ENCODE measurements at regions of chr15 and their contacts with region 1.

Region 1: GRCh38 chr15:99755692-99756409 is 22.6 kb upstream of the LYSMD4 start:
- DNase-seq: peak in 1 of 2 donors; percentile 50
- ATAC-seq: peak; percentile 79 to 91 (median 89)
- H3K4me3 ChIP-seq: no peak overlapping the region
- H3K27ac ChIP-seq: no peak overlapping the region
- H3K4me1 ChIP-seq: peaks cover 0 to 4% (median 0%) of the 10 kb centered on the region in 9 donors
- H3K27me3 ChIP-seq: no peaks in the 10 kb centered on the region
- CTCF ChIP-seq: peak; percentile 68 to 92 (median 89)

Region 2: GRCh38 chr15:99275525-99276128 is 480.2 kb before region 1 on chr15:
- intact Hi-C with region 1: loop called in 8 of 10 experiments (anchors 1 to 10 kb)
- DNase-seq: no peak
- ATAC-seq: peak in 1 of 8 donors; percentile 35
- H3K4me3 ChIP-seq: no peak overlapping the region
- H3K27ac ChIP-seq: no peak overlapping the region
- H3K4me1 ChIP-seq: peaks cover 0 to 13% (median 0%) of the 10 kb centered on the region in 9 donors
- H3K27me3 ChIP-seq: no peaks in the 10 kb centered on the region
- CTCF ChIP-seq: no peak